ENCODE measurements at regions of chr3 and their contacts with region 1.

Region 1: DNA sequence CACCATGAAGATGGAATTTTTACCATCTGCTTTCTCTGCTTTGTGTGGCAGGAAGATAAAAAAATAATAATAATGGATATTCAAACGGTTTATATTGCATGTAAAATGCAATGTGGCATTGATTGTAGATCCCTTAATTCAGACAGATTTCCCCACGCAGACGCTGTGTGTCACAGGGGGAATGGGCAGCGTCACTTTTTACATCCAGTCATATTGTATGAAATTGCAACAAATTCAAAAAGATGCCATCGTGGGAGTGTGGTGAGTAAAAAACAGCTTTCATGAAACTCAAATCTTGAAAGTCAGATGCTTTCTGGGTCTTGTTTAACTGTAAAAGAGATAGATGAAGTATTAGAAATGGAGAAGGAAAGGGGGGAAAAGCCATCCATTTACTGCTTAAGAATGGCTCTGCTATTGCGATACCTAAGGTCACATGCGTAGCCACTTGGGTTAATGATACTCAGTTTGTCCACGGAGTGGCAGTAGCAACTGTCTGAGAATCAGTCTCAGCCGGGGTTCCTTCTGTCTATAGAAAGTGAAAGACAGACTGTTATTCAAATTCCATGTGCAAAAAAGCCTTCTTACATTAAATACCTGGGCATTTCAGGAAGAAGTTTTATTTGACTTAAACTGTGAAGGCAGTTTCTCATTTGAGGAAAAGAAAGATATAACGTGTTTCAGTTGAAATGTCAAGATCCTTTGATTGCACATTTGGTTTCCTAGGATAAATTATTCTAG is 28.5 kb downstream of the BTD start:
- DNase-seq: peak; percentile 72
- H3K4me3 ChIP-seq: peak overlapping the region in 2 of 3 experiments; percentile 44 to 52
- H3K27ac ChIP-seq: peak overlapping the region; percentile 76
- H3K4me1 ChIP-seq: peaks cover 46% of the 10 kb centered on the region
- H3K27me3 ChIP-seq: no peaks in the 10 kb centered on the region
- CTCF ChIP-seq: peak; percentile 71 to 78

Region 2: GRCh38 chr3:15460891-15461531 is 169.0 kb before region 1 on chr3:
- CTCF ChIA-PET with region 1: no interaction called
- dilution Hi-C with region 1: no loop called
- in situ Hi-C with region 1: no loop called
- intact Hi-C with region 1: no loop called
- DNase-seq: no peak
- H3K4me3 ChIP-seq: no peak overlapping the region
- H3K27ac ChIP-seq: no peak overlapping the region
- H3K4me1 ChIP-seq: no peaks in the 10 kb centered on the region
- H3K27me3 ChIP-seq: no peaks in the 10 kb centered on the region
- CTCF ChIP-seq: no peak

Region 3: GRCh38 chr3:15676259-15676658 is 46.2 kb after region 1 on chr3:
- CTCF ChIA-PET with region 1: no interaction called
- dilution Hi-C with region 1: no loop called
- in situ Hi-C with region 1: no loop called
- intact Hi-C with region 1: loop called (anchors 2 kb)
- DNase-seq: peak; percentile 35
- H3K4me3 ChIP-seq: no peak overlapping the region
- H3K27ac ChIP-seq: no peak overlapping the region
- H3K4me1 ChIP-seq: no peaks in the 10 kb centered on the region
- H3K27me3 ChIP-seq: no peaks in the 10 kb centered on the region
- CTCF ChIP-seq: no peak

Region 4: DNA sequence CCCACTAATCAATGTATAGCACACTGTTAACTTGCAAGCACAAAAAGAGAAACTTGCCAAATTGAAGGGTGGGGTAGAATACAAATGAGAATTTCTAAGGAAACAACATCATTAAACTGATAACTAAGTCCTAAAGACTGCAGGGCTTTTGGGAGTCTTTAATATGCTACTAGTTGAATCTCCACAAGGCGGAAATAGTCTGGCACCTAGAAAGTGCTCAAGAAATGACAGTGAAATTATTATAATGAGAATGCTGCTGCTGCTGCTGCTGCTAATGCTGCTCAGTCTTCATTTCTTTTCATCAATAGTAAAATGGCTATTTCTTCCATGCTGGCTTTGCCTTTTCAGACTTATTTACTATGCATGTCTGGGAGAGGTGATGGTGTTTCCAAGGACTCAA is 63.3 kb after region 1 on chr3:
- CTCF ChIA-PET with region 1: no interaction called
- dilution Hi-C with region 1: no loop called
- in situ Hi-C with region 1: no loop called
- intact Hi-C with region 1: loop called (anchors 5 kb)
- DNase-seq: no peak
- H3K4me3 ChIP-seq: no peak overlapping the region
- H3K27ac ChIP-seq: no peak overlapping the region
- H3K4me1 ChIP-seq: no peaks in the 10 kb centered on the region
- H3K27me3 ChIP-seq: no peaks in the 10 kb centered on the region
- CTCF ChIP-seq: no peak

Region 5: DNA sequence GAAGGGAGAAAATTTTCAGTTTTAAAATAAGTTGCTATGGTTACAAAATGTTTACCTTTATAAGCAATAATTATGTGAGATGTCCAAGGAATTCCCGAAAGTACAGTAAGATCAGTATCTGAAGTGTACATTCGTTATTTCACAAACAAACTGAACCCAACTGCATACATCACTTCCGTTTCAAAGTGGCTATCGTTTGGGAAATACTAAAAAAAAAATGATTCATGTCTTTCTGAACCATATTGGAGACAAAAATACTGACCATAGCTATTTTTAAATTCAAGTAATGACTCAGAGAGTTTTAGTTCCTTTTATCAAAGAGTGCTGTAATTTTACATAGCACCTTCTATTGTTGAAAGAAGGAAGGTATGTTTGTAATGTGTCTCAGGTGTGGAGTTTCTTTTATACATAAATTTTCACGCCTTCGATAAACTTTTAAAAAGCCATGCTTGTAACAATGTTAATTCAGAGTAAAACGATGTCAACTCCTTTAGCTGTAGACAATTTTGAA is 175.8 kb after region 1 on chr3:
- CTCF ChIA-PET with region 1: no interaction called
- dilution Hi-C with region 1: no loop called
- in situ Hi-C with region 1: loop called (anchors 10 kb)
- intact Hi-C with region 1: no loop called
- DNase-seq: no peak
- H3K4me3 ChIP-seq: no peak overlapping the region
- H3K27ac ChIP-seq: peak overlapping the region; percentile 12
- H3K4me1 ChIP-seq: peaks cover 7% of the 10 kb centered on the region
- H3K27me3 ChIP-seq: no peaks in the 10 kb centered on the region
- CTCF ChIP-seq: no peak

Region 6: DNA sequence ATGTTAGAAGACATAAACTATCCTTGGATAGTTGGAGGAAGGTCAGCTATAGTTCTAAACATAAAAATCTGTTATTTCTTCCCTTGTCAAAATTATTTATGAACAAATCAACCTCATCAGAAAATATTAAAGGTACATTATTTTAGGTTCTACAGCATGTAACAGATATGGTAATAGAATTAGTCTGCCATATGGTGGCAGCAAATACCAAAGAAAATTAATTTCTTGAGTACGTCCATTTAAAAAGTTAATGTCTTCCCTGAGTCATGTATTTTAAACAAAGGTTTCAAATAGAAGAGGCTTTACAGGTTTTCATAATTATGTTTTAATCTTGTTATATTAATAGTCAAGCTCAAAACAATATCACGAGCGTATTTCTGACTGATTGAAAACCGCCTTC is 185.7 kb after region 1 on chr3:
- CTCF ChIA-PET with region 1: interaction called, 5 read pairs
- dilution Hi-C with region 1: no loop called
- in situ Hi-C with region 1: no loop called
- intact Hi-C with region 1: loop called (anchors 1 kb)
- DNase-seq: peak; percentile 41
- H3K4me3 ChIP-seq: no peak overlapping the region
- H3K27ac ChIP-seq: no peak overlapping the region
- H3K4me1 ChIP-seq: peaks cover 9% of the 10 kb centered on the region
- H3K27me3 ChIP-seq: no peaks in the 10 kb centered on the region
- CTCF ChIP-seq: peak in 1 of 2 donors; percentile 31

Region 7: GRCh38 chr3:15974647-15975046 is 344.6 kb after region 1 on chr3:
- CTCF ChIA-PET with region 1: no interaction called
- dilution Hi-C with region 1: no loop called
- in situ Hi-C with region 1: no loop called
- intact Hi-C with region 1: no loop called
- DNase-seq: no peak
- H3K4me3 ChIP-seq: no peak overlapping the region
- H3K27ac ChIP-seq: no peak overlapping the region
- H3K4me1 ChIP-seq: peaks cover 6% of the 10 kb centered on the region
- H3K27me3 ChIP-seq: no peaks in the 10 kb centered on the region
- CTCF ChIP-seq: peak in 1 of 2 donors; percentile 28

Region 8: GRCh38 chr3:16060358-16060852 is 430.4 kb after region 1 on chr3:
- CTCF ChIA-PET with region 1: no interaction called
- dilution Hi-C with region 1: no loop called
- in situ Hi-C with region 1: loop called in 1 of 2 experiments (anchors 25 kb)
- intact Hi-C with region 1: no loop called
- DNase-seq: peak; percentile 97
- H3K4me3 ChIP-seq: no peak overlapping the region
- H3K27ac ChIP-seq: peak overlapping the region; percentile 77
- H3K4me1 ChIP-seq: peaks cover 34% of the 10 kb centered on the region
- H3K27me3 ChIP-seq: no peaks in the 10 kb centered on the region
- CTCF ChIP-seq: peak; percentile 10 to 39

Region 9: GRCh38 chr3:16177962-16178627 is 548.1 kb after region 1 on chr3:
- CTCF ChIA-PET with region 1: no interaction called
- dilution Hi-C with region 1: no loop called
- in situ Hi-C with region 1: no loop called
- intact Hi-C with region 1: loop called (anchors 1 kb)
- DNase-seq: peak; percentile 62
- H3K4me3 ChIP-seq: no peak overlapping the region
- H3K27ac ChIP-seq: no peak overlapping the region
- H3K4me1 ChIP-seq: peaks cover 5% of the 10 kb centered on the region
- H3K27me3 ChIP-seq: peaks cover 4% of the 10 kb centered on the region
- CTCF ChIP-seq: peak; percentile 93 to 99

Measured in mammary epithelial cell (primary cell).